Heart left ventricle (tissue), 16 donors: ENCODE measurements at regions of chr1 and their contacts with region 1.

Region 1: DNA sequence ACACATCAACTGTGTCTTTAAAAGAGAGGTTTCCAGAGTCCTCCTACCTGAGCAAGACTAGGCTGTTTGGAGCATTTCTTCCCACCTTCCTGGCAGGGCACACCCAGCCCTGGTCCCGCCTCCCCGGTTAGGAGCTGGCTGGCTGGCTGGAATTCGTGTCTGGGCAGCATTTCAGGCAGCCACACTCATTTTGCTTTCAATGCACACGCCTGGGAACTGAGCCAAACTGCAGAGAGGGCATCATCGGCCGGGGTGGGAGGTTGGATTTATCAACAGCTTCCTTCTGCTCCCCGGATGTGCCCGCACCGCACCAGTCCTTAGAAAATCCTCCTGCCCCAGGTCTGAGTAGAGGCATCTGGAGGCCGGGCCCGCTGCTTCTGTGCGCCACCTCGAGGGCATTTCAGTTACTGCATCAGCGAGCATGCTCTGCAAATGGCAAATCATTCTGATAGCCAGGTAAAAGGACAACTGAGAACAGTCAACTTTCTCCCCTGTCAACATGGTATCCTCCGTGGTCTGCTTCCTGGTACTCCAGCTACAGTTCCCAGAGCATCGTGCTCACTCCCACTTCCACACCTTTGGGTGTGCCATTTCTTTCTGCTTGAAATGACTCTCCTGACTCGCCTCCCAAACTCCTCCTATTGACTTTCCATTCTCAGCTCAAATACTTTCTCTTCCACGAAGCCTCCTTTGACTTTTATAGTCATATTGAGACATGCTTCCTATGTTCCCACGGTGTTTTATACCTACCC is 20.6 kb downstream of the TCEA3 start:
- DNase-seq: peak; percentile 86 to 90 (median 90)
- ATAC-seq: peak; percentile 85 to 94 (median 88)
- H3K4me3 ChIP-seq: peak overlapping the region in 7 of 12 donors; percentile 1 to 28 (median 8)
- H3K27ac ChIP-seq: peak overlapping the region in 11 of 12 donors; percentile 32 to 76 (median 56)
- H3K4me1 ChIP-seq: peaks cover 5 to 60% (median 34%) of the 10 kb centered on the region in 12 donors
- H3K27me3 ChIP-seq: no peaks in the 10 kb centered on the region
- CTCF ChIP-seq: peak; percentile 88 to 99 (median 95)
- POLR2A ChIP-seq: no peak

Region 2: GRCh38 chr1:23224714-23225648 is 178.9 kb before region 1 on chr1:
- intact Hi-C with region 1: loop called in 1 of 10 experiments (anchors 10 kb)
- DNase-seq: peak in 4 of 5 donors; percentile 33 to 58 (median 55)
- ATAC-seq: peak; percentile 51 to 88 (median 80)
- H3K4me3 ChIP-seq: peak overlapping the region in 1 of 12 donors; percentile 18
- H3K27ac ChIP-seq: peak overlapping the region in 8 of 12 donors; percentile 24 to 65 (median 40)
- H3K4me1 ChIP-seq: peaks cover 0 to 15% (median 7%) of the 10 kb centered on the region in 12 donors
- H3K27me3 ChIP-seq: peaks cover 0 to 9% (median 0%) of the 10 kb centered on the region in 9 donors
- CTCF ChIP-seq: no peak
- POLR2A ChIP-seq: no peak

Region 3: GRCh38 chr1:23322770-23323169 is 81.1 kb before region 1 on chr1:
- intact Hi-C with region 1: loop called in 1 of 10 experiments (anchors 10 kb)
- DNase-seq: no peak
- ATAC-seq: no peak
- H3K4me3 ChIP-seq: no peak overlapping the region
- H3K27ac ChIP-seq: no peak overlapping the region
- H3K4me1 ChIP-seq: peaks cover 0 to 16% (median 7%) of the 10 kb centered on the region in 12 donors
- H3K27me3 ChIP-seq: no peaks in the 10 kb centered on the region
- CTCF ChIP-seq: no peak
- POLR2A ChIP-seq: no peak

Region 4: DNA sequence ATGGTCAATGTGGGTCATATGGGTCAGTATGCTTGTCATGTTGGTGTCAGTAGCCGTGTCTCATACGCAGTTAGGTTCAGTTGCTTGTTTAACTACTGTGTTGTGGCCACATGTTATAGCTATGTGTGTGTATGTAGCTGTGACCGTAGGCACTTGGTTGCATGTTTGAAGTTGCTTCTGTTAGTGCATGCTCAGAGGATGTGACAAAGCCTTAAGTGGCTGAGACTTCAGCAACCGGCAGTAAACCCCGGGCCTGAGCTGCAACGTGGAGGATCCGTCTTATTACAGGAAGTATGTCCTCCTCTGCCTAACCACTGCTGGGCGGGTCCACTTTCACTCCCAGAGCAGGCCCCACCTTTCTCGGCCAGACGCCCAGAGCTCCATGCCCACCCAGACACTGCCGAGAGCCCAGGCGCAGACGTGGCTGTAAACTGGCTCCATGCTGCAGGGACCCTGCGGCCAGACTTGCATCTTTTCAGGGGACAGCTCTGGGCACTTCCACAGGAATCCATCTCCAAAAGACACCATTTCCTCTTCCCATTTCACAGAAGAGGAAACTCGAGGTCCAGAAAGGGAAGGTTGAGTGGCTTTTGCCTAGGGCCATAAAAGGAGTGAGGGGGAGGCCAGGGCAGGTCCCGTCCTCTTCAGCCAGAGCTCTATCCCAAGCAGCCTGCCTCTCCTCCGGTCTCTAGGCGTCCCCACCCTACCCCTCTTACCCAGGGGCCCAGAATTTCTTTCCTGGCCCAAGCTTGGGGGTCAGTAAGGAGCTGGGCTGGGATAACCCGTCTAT is 18.5 kb after region 1 on chr1:
- intact Hi-C with region 1: no loop called
- DNase-seq: peak; percentile 74 to 84 (median 82)
- ATAC-seq: peak; percentile 53 to 70 (median 56)
- H3K4me3 ChIP-seq: peak overlapping the region in 8 of 12 donors; percentile 5 to 80 (median 22)
- H3K27ac ChIP-seq: peak overlapping the region in 11 of 12 donors; percentile 71 to 95 (median 85)
- H3K4me1 ChIP-seq: peaks cover 0 to 59% (median 36%) of the 10 kb centered on the region in 12 donors
- H3K27me3 ChIP-seq: peaks cover 0 to 16% (median 0%) of the 10 kb centered on the region in 9 donors
- CTCF ChIP-seq: no peak
- POLR2A ChIP-seq: no peak